Caki2 (cell line): ENCODE measurements at regions of chr16 and their contacts with region 1.

Region 1: GRCh38 chr16:28950648-28951409 is at the start of gene NFATC2IP:
- DNase-seq: peak; percentile 100
- total RNA-seq, gene NFATC2IP: 22.2 and 45.4 TPM in 2 replicates

Region 2: GRCh38 chr16:28999577-28999976 is 48.7 kb after region 1 on chr16:
- in situ Hi-C with region 1: no loop called
- DNase-seq: no peak

Region 3: DNA sequence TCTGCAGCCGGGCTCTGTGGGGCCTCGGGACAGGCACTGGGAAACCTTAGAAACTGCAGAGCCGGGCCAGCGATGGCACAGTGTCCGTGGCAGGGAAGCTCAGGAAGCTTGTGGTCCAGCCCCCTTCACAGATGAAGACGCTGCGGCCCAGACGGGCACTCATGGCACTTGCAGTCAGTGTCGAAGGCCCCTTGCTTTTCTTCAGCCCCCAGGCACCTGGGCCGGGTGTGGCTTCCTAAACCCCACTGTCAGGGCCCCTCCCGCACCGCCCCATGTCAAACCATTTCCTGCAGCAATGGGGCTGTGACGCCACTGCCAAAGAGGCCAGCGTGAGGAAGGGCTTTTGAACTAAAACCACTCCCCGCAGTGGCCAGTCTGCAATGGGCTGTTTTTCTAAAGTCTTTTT is 198.0 kb after region 1 on chr16:
- in situ Hi-C with region 1: loop called (anchors 25 kb)
- DNase-seq: no peak